Posterior vena cava (tissue), 2 donors: ENCODE measurements at regions of chr7 and their contacts with region 1.

Region 1: DNA sequence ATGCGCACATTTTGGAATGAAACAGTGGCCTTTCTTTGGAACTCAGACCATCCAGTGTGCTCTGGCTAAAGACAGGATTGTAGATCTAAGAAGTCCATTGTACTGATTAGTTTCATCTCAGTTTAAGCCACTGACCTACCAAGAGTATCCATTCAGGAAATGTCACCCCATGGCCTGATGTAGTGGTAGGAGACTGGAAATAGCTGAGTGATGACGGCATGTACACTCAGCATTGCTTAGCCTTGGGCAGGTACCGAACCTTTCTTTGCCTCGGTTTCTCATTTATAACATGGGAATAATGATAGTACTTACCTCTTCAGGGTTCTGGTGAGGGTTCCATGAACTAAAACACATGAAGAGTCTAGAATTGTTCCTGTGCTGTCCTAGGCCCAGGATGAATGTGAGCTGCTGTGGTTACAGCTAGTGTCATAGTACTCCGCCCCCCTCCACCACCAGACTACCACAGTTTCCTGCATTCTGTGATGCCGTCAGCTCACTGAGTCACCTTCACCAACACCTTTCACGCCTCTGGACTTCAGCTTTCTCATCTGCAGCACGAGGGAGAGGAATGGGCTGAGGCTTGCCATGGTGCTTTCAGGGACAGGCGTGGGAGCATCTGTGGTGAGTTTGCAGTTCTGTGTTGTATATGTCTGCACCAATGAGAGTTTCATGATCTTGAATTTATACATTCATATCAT is 484.0 kb upstream of the GALNT17 start:
- DNase-seq: no peak

Region 2: GRCh38 chr7:70608229-70608628 is 39.7 kb before region 1 on chr7:
- intact Hi-C with region 1: loop called in 1 of 2 experiments (anchors 1 kb)
- DNase-seq: no peak